Caco-2 (cell line): ENCODE measurements at regions of chr1 and their contacts with region 1.

Region 1: GRCh38 chr1:206025283-206025820 is 1.7 kb upstream of the CTSE start:
- DNase-seq: no peak
- H3K4me3 ChIP-seq: no peak overlapping the region
- H3K4me3 Mint-ChIP-seq: no peak overlapping the region
- H3K27ac Mint-ChIP-seq: no peak overlapping the region
- H3K4me1 ChIP-seq: peaks cover 8% of the 10 kb centered on the region; the same call in 1 of the 2 replicates
- H3K4me1 Mint-ChIP-seq: peaks cover 11% of the 10 kb centered on the region
- H3K27me3 ChIP-seq: no peaks in the 10 kb centered on the region
- H3K27me3 Mint-ChIP-seq: peaks cover 4% of the 10 kb centered on the region
- CTCF ChIP-seq: no peak

Region 2: GRCh38 chr1:206012086-206012859 is 13.1 kb before region 1 on chr1:
- CTCF ChIA-PET with region 1: interaction called, 3 read pairs
- POLR2A ChIA-PET with region 1: no interaction called
- intact Hi-C with region 1: loop called (anchors 1 kb)
- DNase-seq: no peak
- H3K4me3 ChIP-seq: no peak overlapping the region
- H3K4me3 Mint-ChIP-seq: no peak overlapping the region
- H3K27ac Mint-ChIP-seq: no peak overlapping the region
- H3K4me1 ChIP-seq: no peaks in the 10 kb centered on the region
- H3K4me1 Mint-ChIP-seq: no peaks in the 10 kb centered on the region
- H3K27me3 ChIP-seq: no peaks in the 10 kb centered on the region
- H3K27me3 Mint-ChIP-seq: no peaks in the 10 kb centered on the region
- CTCF ChIP-seq: no peak